Common myeloid progenitor, CD34-positive (primary cell): ENCODE measurements at regions of chr3 and their contacts with region 1.

Region 1: DNA sequence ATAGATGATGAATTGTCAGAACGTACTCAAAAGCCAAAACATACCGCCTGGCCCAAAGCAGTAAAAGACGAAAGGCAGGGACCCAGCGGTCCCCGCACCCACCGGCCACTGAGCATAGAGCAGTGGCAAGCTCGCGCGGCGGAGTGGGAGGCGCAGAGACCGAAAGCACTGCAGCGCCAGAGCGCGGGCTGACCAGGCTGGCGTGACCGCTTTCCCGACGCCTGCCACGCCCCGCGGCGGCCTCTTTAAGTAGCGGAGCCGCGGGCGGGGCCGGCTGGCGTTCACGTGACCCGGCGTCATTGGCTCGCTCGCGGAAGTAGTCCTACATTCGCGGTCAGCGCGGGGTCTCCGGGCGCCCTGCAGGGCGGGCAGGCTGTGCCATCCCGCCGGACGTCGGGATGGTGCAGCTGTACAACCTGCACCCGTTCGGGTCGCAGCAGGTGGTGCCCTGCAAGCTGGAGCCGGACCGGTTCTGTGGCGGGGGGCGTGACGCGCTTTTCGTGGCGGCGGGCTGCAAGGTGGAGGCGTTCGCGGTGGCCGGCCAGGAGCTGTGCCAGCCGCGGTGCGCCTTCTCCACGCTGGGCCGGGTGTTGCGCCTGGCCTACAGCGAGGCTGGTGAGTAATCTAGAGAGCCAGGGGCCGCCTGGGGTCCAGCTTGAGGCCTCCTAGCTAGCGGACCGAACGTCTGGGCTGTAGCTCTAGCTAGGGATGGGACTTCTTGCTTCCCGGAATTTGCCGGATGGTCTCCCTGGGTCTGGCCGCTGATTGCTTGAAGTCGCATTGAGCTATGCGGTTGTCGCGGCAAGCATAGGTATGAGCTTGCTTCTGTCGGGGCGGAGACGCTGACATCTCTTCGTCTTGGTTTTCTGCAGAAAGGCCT is at the start of gene HPS3:
- DNase-seq: peak; percentile 83 to 92 (median 88)
- H3K4me3 ChIP-seq: peak within 1 kb of the TSS; percentile 85 to 97 (median 91)
- H3K27ac ChIP-seq: peak within 1 kb of the TSS; percentile 37 to 75
- H3K4me1 ChIP-seq: peaks cover 10 to 26% (median 16%) of the 10 kb centered on the region in 4 experiments
- H3K27me3 ChIP-seq: no peaks in the 10 kb centered on the region

Region 2: DNA sequence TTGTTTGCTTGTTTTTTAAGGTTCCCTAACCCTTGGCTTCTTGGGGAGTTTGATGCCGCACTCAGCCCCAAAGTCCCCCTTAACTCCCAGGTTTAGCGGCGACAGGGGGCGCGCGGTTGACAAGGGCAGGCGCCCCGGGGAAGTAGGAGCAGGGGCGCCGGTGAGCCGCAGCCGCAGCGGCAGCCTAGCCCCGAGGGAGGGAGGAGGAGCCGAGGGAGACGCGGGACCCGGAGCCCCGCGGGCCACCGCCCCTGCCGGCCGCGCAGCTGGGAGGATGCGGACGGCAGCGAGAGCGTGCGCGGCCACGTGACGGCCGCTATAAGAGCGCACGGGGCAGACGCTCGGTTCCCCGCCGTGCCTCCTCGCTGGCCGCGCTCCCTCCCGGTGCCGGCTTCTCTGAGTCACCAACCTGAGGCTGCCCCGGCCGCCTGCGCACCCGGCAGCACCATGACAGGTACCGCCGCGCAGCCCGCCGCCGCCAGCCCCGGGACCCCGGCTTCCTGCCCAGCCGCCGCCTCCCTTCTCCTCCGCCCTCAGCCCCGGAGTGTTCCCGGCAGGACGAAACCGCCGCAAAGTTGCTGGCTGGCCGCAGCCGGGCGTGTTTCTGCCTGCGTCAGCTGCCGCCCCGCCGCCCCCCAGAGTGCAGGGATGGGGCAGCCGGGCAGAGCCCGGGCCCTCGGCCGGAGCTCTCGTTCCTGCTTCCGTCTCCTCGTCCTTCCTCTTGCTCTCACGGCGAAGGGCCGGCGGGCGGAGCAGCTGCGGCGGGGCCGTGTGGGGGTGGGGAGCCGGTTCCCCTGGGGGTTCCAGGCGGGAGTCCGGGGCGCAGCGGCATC is 138.2 kb before region 1 on chr3 and contains the start of gene GYG1:
- CTCF ChIA-PET with region 1: no interaction called
- POLR2A ChIA-PET with region 1: no interaction called
- DNase-seq: peak; percentile 84 to 93 (median 91)
- H3K4me3 ChIP-seq: peak within 1 kb of the TSS; percentile 67 to 99 (median 82)
- H3K27ac ChIP-seq: peak within 1 kb of the TSS in 1 of 2 experiments; percentile 75
- H3K4me1 ChIP-seq: peaks cover 11 to 28% (median 17%) of the 10 kb centered on the region in 4 experiments
- H3K27me3 ChIP-seq: no peaks in the 10 kb centered on the region

Region 3: DNA sequence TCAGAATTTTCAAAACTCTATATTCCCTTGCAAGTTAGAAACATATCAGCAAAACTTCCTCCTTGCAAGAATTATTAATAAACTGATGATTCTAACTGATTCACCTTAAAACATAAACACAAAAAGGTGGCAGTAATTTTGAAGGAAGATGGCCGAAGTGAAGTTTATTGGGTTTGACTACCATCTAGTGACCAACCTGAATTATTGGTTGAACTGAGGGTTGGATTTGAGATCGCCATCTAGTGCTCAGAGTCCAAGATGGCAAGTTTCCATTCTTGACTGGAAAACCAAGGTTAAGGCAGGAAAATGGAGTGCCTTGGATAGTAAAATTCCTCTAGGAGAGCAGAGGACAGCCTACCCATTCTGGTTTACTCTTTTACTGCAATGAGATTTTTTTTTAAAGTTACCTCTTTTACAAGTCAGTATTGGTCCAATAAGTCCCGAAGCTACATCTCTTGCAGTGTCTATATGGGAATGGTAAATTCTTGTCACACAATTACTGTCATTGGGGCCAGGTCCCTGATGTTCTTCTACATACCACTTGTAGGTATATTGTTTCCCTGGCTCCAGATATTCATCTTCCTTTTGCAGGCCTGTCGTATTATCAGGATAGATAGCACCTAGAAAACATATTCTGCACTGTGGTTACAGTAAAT is 143.7 kb after region 1 on chr3:
- CTCF ChIA-PET with region 1: interaction called, 13 read pairs
- POLR2A ChIA-PET with region 1: interaction called, 3 read pairs
- DNase-seq: peak; percentile 81 to 86 (median 82)
- H3K4me3 ChIP-seq: no peak overlapping the region
- H3K27ac ChIP-seq: no peak overlapping the region
- H3K4me1 ChIP-seq: peaks cover 7 to 30% (median 22%) of the 10 kb centered on the region in 4 experiments
- H3K27me3 ChIP-seq: no peaks in the 10 kb centered on the region